Activated T-helper 2 cell treated with anti-CD3 and anti-CD28 coated beads, Interferon-gamma antibody, Interleukin-2, Interleukin-4, amounts not matched to agents 10 μg/mL and 5 μg/mL and 100 μg/mL, durations not matched to agents 14 hours and 24 hours and 36 hours (primary cell): ENCODE measurements at regions of chr9 and their contacts with region 1.

Region 1: GRCh38 chr9:131407717-131408195 is 13.9 kb downstream of the PRRC2B start:
- DNase-seq: no peak
- H3K4me3 Mint-ChIP-seq: peak overlapping the region; percentile 70
- H3K27ac Mint-ChIP-seq: peak overlapping the region; percentile 77
- H3K4me1 Mint-ChIP-seq: peaks cover 77% of the 10 kb centered on the region
- H3K27me3 Mint-ChIP-seq: no peaks in the 10 kb centered on the region

Region 2: DNA sequence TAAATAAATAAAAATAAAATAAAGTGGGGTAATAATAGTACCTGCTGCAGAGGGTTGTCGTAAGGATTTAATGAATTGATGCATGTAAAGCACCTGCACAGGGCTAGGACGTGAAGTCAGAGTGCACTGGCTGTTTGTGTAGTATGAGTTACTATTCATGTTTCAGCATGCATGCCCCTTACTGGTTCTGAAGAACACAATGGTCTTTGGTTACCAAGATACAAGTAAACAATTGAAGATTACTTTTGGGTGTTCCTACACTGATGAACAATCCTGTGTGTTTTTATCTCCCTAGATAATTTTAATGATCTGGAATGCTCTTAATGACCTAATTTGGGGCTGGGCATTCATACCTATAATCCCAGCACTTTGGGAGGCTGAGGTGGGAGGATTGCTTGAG is 37.1 kb before region 1 on chr9:
- intact Hi-C with region 1: loop called (anchors 5 kb)
- DNase-seq: no peak
- H3K4me3 Mint-ChIP-seq: no peak overlapping the region
- H3K27ac Mint-ChIP-seq: no peak overlapping the region
- H3K4me1 Mint-ChIP-seq: peaks cover 15% of the 10 kb centered on the region
- H3K27me3 Mint-ChIP-seq: no peaks in the 10 kb centered on the region

Region 3: GRCh38 chr9:131418143-131419028 is 10.6 kb after region 1 on chr9:
- intact Hi-C with region 1: loop called (anchors 1 kb)
- DNase-seq: no peak
- H3K4me3 Mint-ChIP-seq: peak overlapping the region; percentile 74
- H3K27ac Mint-ChIP-seq: peak overlapping the region; percentile 84
- H3K4me1 Mint-ChIP-seq: peaks cover 77% of the 10 kb centered on the region
- H3K27me3 Mint-ChIP-seq: no peaks in the 10 kb centered on the region

Region 4: GRCh38 chr9:131454028-131454427 is 46.3 kb after region 1 on chr9:
- intact Hi-C with region 1: loop called (anchors 5 kb)
- DNase-seq: no peak
- H3K4me3 Mint-ChIP-seq: no peak overlapping the region
- H3K27ac Mint-ChIP-seq: no peak overlapping the region
- H3K4me1 Mint-ChIP-seq: peaks cover 16% of the 10 kb centered on the region
- H3K27me3 Mint-ChIP-seq: no peaks in the 10 kb centered on the region